Transverse colon (tissue), 4 donors: ENCODE measurements at regions of chr3 and their contacts with region 1.

Region 1: DNA sequence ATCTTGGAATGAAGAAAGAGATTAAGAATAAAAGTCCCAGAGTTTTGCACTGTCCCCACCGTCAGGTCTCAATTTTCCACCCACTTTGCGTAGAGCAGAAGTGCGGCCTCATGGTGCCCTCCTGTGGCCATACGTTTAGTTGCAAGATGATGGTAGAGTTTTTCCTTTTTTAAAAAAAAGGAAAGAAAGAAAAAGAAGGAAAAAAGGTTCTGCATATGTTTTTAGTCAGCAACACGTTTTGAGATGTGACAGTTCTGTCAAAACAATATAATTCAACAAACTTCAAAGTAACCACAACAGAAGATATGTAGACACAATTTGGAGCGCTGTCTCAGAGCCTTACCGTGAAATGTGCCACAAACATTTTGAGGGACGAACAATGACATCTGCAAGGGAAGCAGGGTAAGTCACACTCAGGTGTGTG is 24.6 kb downstream of the EBLN2 start:
- DNase-seq: peak; percentile 42
- H3K4me3 ChIP-seq: no peak overlapping the region
- H3K27ac ChIP-seq: no peak overlapping the region
- H3K4me1 ChIP-seq: peaks cover 0 to 7% (median 2%) of the 10 kb centered on the region in 4 donors
- H3K27me3 ChIP-seq: no peaks in the 10 kb centered on the region
- CTCF ChIP-seq: peak; percentile 76 to 88 (median 83)
- EP300 ChIP-seq: no peak
- POLR2A ChIP-seq: no peak

Region 2: GRCh38 chr3:71926262-71926600 is 1159.9 kb before region 1 on chr3:
- in situ Hi-C with region 1: loop called in 1 of 4 experiments (anchors 25 kb)
- intact Hi-C with region 1: no loop called
- DNase-seq: peak; percentile 50
- H3K4me3 ChIP-seq: no peak overlapping the region
- H3K27ac ChIP-seq: no peak overlapping the region
- H3K4me1 ChIP-seq: no peaks in the 10 kb centered on the region
- H3K27me3 ChIP-seq: no peaks in the 10 kb centered on the region
- CTCF ChIP-seq: peak; percentile 40 to 68 (median 48)
- EP300 ChIP-seq: no peak
- POLR2A ChIP-seq: no peak

Region 3: GRCh38 chr3:72665701-72666443 is 420.2 kb before region 1 on chr3:
- in situ Hi-C with region 1: loop called in 1 of 4 experiments (anchors 25 kb)
- intact Hi-C with region 1: no loop called
- DNase-seq: peak; percentile 58
- H3K4me3 ChIP-seq: no peak overlapping the region
- H3K27ac ChIP-seq: no peak overlapping the region
- H3K4me1 ChIP-seq: no peaks in the 10 kb centered on the region
- H3K27me3 ChIP-seq: no peaks in the 10 kb centered on the region
- CTCF ChIP-seq: peak; percentile 46 to 74 (median 61)
- EP300 ChIP-seq: no peak
- POLR2A ChIP-seq: no peak

Region 4: GRCh38 chr3:72938471-72939265 is 147.4 kb before region 1 on chr3:
- in situ Hi-C with region 1: loop called in 1 of 4 experiments (anchors 10 kb)
- intact Hi-C with region 1: loop called (anchors 5 kb)
- DNase-seq: peak; percentile 28
- H3K4me3 ChIP-seq: no peak overlapping the region
- H3K27ac ChIP-seq: peak overlapping the region; percentile 29 to 62 (median 49)
- H3K4me1 ChIP-seq: peaks cover 0 to 32% (median 7%) of the 10 kb centered on the region in 4 donors
- H3K27me3 ChIP-seq: no peaks in the 10 kb centered on the region
- CTCF ChIP-seq: peak; percentile 49 to 96 (median 65)
- EP300 ChIP-seq: no peak
- POLR2A ChIP-seq: no peak